PC-9 (cell line): ENCODE measurements at regions of chr7 and their contacts with region 1.

Region 1: DNA sequence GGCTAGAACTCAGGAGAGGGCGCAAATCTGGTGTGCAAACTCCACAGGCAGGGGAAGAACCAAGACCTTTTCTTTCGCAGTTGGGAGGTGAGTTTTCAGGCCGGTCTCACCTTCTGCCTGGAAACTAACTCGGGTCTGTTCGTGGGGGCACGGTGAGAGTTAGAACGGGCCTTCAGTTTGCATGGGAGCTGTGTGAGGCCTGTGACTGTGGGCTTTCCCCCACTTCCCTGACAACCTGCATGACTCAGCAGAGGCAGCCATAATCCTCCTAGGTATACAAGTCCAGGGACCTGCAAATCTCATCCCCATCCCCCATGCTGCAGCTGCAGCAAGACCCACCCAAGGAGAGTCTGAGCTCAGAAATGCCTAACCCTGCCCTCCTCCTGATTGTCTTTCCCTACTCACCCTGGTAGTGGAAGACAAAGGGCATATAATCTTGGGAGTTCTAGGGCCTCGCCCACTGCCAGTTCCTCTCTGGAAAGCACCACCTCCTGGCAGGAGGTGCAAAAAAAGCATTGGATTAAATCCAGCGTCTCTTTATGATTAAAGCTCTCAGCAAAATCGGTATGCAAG is 194.9 kb upstream of the ETV1 start:
- DNase-seq: peak; percentile 20 to 26
- H3K4me3 ChIP-seq: no peak overlapping the region
- H3K27ac ChIP-seq: no peak overlapping the region
- H3K4me1 ChIP-seq: no peaks in the 10 kb centered on the region
- H3K27me3 ChIP-seq: no peaks in the 10 kb centered on the region
- CTCF ChIP-seq: no peak

Region 2: DNA sequence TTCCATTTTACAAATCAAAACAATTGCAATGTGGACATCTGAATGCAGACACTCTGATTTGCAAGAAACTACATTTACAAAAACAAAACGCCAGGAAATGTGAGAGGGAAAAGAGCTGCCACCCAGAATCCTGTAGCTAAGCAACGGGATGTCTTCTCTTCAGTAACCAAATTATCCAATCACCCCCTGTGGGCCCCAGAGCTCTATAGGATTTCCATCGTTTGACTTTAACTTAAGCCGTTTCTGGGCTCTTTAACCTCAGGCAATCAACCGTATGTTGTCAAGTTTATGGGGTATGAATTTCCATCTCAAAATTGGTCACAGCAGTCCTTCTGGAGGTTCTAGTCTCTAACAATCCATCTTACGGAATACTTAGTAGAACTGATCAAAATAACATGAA is 435.4 kb before region 1 on chr7:
- CTCF ChIA-PET with region 1: no interaction called
- POLR2A ChIA-PET with region 1: interaction called, 10 read pairs
- intact Hi-C with region 1: no loop called
- DNase-seq: no peak
- H3K4me3 ChIP-seq: no peak overlapping the region
- H3K27ac ChIP-seq: no peak overlapping the region
- H3K4me1 ChIP-seq: no peaks in the 10 kb centered on the region
- H3K27me3 ChIP-seq: no peaks in the 10 kb centered on the region
- CTCF ChIP-seq: no peak